CD4-positive, alpha-beta memory T cell (primary cell): ENCODE measurements at regions of chr5 and their contacts with region 1.

Region 1: DNA sequence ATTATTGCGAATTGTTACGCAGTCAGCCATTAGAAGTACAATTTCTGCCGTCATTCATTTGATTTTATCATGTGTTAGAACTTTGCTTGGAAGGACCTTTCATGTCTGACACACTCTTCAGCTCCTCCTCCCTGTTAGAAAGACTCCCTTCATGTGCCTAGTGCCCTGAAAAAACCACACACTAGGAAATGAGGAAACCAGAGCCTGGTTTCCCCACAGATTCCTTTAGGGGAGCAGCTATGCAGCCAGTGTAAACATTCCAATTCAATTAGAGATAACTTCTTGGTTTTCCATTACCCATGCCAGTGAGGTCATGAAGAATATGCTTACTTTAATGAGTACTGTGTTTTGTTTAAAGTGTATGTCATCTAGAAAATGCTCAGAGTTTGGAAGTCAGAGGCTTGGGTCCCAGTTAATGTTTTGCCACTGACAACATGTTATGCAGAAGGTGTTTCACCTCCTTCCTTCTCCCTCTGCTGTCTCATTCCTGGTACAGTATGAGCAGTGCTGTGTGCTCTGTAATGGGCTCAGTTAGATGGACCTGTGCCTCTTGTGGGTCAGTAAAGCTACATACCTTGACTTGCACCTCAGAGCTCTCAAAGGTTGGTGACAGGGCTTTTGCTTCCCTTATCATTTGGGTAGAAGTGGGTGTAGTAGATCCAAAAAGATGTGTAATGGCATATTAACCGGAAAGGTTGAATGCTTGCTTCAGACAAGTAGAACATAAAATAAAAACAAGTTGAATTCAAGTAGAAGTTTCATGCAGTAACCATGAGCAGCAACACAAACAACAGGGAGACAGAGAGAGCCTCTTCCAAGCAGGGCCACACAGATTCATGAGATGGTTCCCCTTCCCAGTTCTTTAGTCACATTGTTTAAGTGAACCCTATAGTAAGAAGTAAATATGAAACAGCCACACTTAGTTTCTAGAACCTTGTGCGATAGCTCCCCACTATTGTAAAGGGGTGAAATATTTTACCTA is 52.6 kb upstream of the TNFAIP8 start:
- DNase-seq: no peak
- H3K4me3 ChIP-seq: peak overlapping the region; percentile 13 to 17
- H3K4me3 Mint-ChIP-seq: peak overlapping the region; percentile 17 to 96 (median 74)
- H3K27ac ChIP-seq: peak overlapping the region; percentile 43
- H3K27ac Mint-ChIP-seq: peak overlapping the region; percentile 80 to 99 (median 94)
- H3K4me1 ChIP-seq: peaks cover 83% of the 10 kb centered on the region
- H3K4me1 Mint-ChIP-seq: peaks cover 64 to 97% (median 79%) of the 10 kb centered on the region in 4 donors
- H3K27me3 ChIP-seq: no peaks in the 10 kb centered on the region
- H3K27me3 Mint-ChIP-seq: no peaks in the 10 kb centered on the region

Region 2: GRCh38 chr5:119179857-119180641 is 123.2 kb before region 1 on chr5:
- CTCF ChIA-PET with region 1: no interaction called
- POLR2A ChIA-PET with region 1: no interaction called
- intact Hi-C with region 1: loop called (anchors 10 kb)
- DNase-seq: no peak
- H3K4me3 ChIP-seq: no peak overlapping the region
- H3K4me3 Mint-ChIP-seq: no peak overlapping the region
- H3K27ac ChIP-seq: no peak overlapping the region
- H3K27ac Mint-ChIP-seq: no peak overlapping the region
- H3K4me1 ChIP-seq: no peaks in the 10 kb centered on the region
- H3K4me1 Mint-ChIP-seq: no peaks in the 10 kb centered on the region
- H3K27me3 ChIP-seq: no peaks in the 10 kb centered on the region
- H3K27me3 Mint-ChIP-seq: no peaks in the 10 kb centered on the region

Region 3: DNA sequence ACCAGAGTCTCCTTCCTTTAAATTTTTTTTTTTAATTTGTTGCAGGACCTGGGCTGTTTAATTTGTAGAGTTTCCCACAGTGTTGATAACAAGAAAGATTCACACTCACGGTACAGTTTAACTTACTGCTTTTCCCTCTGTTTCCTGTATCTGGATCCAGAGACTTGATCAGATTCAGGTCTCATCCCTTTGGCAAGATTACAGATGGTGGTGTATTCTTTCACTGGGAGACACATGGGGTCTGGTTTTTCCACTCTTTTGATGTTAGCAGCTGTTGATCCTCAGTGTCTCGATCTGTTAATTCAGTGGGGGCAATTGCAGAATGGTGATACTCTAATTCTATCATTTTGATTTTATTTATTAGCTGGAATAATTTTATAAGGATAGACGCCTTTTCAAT is 22.8 kb before region 1 on chr5:
- CTCF ChIA-PET with region 1: interaction called, 9 read pairs
- POLR2A ChIA-PET with region 1: interaction called, 187 read pairs
- intact Hi-C with region 1: no loop called
- DNase-seq: no peak
- H3K4me3 ChIP-seq: no peak overlapping the region
- H3K4me3 Mint-ChIP-seq: peak overlapping the region in 7 of 8 donors; percentile 30 to 92 (median 74)
- H3K27ac ChIP-seq: peak overlapping the region; percentile 25
- H3K27ac Mint-ChIP-seq: peak overlapping the region; percentile 1 to 99 (median 58)
- H3K4me1 ChIP-seq: peaks cover 99% of the 10 kb centered on the region
- H3K4me1 Mint-ChIP-seq: peaks cover 83 to 100% (median 93%) of the 10 kb centered on the region in 4 donors
- H3K27me3 ChIP-seq: no peaks in the 10 kb centered on the region
- H3K27me3 Mint-ChIP-seq: peaks cover 0 to 2% of the 10 kb centered on the region in 2 donors

Region 4: DNA sequence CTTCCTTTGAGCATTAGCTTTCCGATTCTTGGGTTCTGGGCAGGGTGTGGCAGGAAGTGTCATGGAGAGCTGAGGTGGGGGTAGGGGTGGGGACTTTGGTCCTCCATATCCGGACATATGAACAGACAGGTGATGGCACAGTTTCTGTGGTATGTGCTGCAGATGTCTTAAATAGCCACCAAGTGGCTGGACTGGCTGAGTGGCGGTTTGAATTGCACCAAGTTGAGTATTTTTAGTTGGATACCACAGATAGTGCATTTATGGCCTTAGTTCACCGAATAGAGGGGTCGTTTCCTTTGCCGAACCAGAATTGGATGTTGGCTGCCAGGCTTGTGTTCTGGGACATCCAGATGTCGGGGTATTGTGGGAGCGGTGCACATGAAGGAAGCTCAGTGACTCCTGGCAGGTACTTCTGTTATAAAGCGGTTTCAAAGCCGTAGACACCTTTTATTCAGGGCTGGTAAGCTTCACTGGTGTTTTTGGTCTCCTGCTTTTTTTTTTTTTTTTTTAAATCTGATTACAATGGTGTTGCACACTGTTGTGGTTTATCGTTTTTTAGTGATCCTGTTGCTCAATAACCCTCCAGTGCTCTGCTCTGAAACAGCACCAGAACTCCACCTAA is 37.5 kb after region 1 on chr5:
- CTCF ChIA-PET with region 1: interaction called, 11 read pairs
- POLR2A ChIA-PET with region 1: interaction called, 564 read pairs
- intact Hi-C with region 1: no loop called
- DNase-seq: peak; percentile 71 to 85 (median 77)
- H3K4me3 ChIP-seq: peak overlapping the region; percentile 40 to 63
- H3K4me3 Mint-ChIP-seq: peak overlapping the region; percentile 80 to 89 (median 86)
- H3K27ac ChIP-seq: peak overlapping the region; percentile 75
- H3K27ac Mint-ChIP-seq: peak overlapping the region; percentile 89 to 97 (median 92)
- H3K4me1 ChIP-seq: peaks cover 99% of the 10 kb centered on the region
- H3K4me1 Mint-ChIP-seq: peaks cover 81 to 97% (median 89%) of the 10 kb centered on the region in 4 donors
- H3K27me3 ChIP-seq: no peaks in the 10 kb centered on the region
- H3K27me3 Mint-ChIP-seq: no peaks in the 10 kb centered on the region